Endothelial cell of umbilical vein (primary cell): ENCODE measurements at regions of chr5 and their contacts with region 1.

Region 1: GRCh38 chr5:13957032-13957645 is 12.7 kb upstream of the DNAH5 start:
- DNase-seq: peak; percentile 66
- H3K4me3 ChIP-seq: no peak overlapping the region
- H3K27ac ChIP-seq: no peak overlapping the region
- H3K4me1 ChIP-seq: no peaks in the 10 kb centered on the region
- H3K27me3 ChIP-seq: peaks cover 5 to 6% of the 10 kb centered on the region in 2 experiments
- CTCF ChIP-seq: peak; percentile 39 to 54
- POLR2A ChIP-seq: no peak

Region 2: DNA sequence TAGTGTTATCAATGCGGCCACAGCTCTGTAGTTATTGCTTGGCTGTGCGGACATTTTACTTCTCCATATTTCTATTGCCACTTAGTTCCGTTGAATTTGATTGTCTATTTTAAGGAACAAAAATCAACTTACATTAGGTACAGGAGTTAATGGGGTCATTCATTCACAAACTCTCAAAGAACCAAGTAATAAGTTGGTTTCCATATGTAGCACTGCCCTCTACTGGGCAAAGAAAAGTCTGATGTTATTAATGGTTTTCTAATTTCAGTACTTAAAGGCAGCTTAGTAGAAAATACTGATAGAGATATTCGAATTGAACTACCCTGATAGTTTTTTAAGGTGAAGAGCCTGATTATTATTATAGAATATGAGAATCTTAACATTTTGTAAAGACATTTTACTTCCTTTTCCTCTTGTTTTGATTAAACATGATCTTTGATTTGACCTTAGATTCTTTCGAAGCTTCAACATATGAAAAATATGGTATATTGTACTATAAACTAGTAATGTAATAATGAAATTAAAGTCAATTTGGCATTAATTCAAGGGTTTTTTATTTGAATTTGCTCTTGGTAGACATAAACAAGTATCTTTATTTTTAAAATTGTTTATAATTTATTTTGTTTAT is 1933.4 kb before region 1 on chr5:
- CTCF ChIA-PET with region 1: interaction called, 14 read pairs
- POLR2A ChIA-PET with region 1: no interaction called
- dilution Hi-C with region 1: no loop called
- intact Hi-C with region 1: no loop called
- DNase-seq: peak; percentile 34
- H3K4me3 ChIP-seq: no peak overlapping the region
- H3K27ac ChIP-seq: no peak overlapping the region
- H3K4me1 ChIP-seq: no peaks in the 10 kb centered on the region
- H3K27me3 ChIP-seq: no peaks in the 10 kb centered on the region
- CTCF ChIP-seq: peak; percentile 25 to 28
- POLR2A ChIP-seq: no peak

Region 3: GRCh38 chr5:13464532-13465193 is 492.5 kb before region 1 on chr5:
- CTCF ChIA-PET with region 1: no interaction called
- POLR2A ChIA-PET with region 1: no interaction called
- dilution Hi-C with region 1: no loop called
- intact Hi-C with region 1: no loop called
- DNase-seq: no peak
- H3K4me3 ChIP-seq: no peak overlapping the region
- H3K27ac ChIP-seq: no peak overlapping the region
- H3K4me1 ChIP-seq: no peaks in the 10 kb centered on the region
- H3K27me3 ChIP-seq: no peaks in the 10 kb centered on the region
- CTCF ChIP-seq: no peak
- POLR2A ChIP-seq: no peak

Region 4: GRCh38 chr5:13946115-13946514 is 11.0 kb before region 1 on chr5:
- CTCF ChIA-PET with region 1: interaction called, 13 read pairs
- POLR2A ChIA-PET with region 1: no interaction called
- dilution Hi-C with region 1: no loop called
- intact Hi-C with region 1: no loop called
- DNase-seq: no peak
- H3K4me3 ChIP-seq: no peak overlapping the region
- H3K27ac ChIP-seq: no peak overlapping the region
- H3K4me1 ChIP-seq: no peaks in the 10 kb centered on the region
- H3K27me3 ChIP-seq: peaks cover 2 to 7% of the 10 kb centered on the region in 2 experiments
- CTCF ChIP-seq: no peak
- POLR2A ChIP-seq: no peak